Mucosa of descending colon (tissue), 3 donors: ENCODE measurements at regions of chr7 and their contacts with region 1.

Region 1: GRCh38 chr7:26500749-26501352 is 209.2 kb downstream of the SNX10 start:
- DNase-seq: no peak
- ATAC-seq: no peak
- H3K4me3 ChIP-seq: no peak overlapping the region
- H3K4me1 ChIP-seq: no peaks in the 10 kb centered on the region
- CTCF ChIP-seq: no peak

Region 2: GRCh38 chr7:26376175-26376917 is 124.5 kb before region 1 on chr7:
- intact Hi-C with region 1: loop called (anchors 10 kb)
- DNase-seq: peak; percentile 39 to 69 (median 63)
- ATAC-seq: peak; percentile 70
- H3K4me3 ChIP-seq: peak overlapping the region; percentile 17
- H3K4me1 ChIP-seq: no peaks in the 10 kb centered on the region
- CTCF ChIP-seq: no peak

Region 3: DNA sequence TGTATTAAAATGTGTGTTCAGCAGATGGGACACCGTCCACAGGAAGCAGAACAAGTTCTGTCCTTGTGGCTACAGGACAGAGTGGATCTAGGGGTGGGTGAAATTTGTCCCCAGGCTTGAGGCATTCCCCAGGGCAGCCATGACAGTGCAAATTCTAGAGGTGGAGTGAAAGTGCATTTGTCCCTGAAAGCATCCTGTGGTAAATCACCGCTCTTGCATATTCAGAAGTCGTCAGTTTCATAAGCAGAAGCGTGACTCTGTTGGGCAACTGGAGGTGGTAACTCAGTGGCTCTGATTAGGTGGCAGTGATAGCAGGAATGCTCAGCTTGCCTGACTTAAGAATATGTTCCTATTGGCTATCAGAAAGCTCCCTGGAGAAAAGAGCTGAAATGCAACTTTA is 112.6 kb before region 1 on chr7:
- intact Hi-C with region 1: loop called in 1 of 2 experiments (anchors 10 kb)
- DNase-seq: no peak
- ATAC-seq: no peak
- H3K4me3 ChIP-seq: no peak overlapping the region
- H3K4me1 ChIP-seq: no peaks in the 10 kb centered on the region
- CTCF ChIP-seq: no peak

Region 4: DNA sequence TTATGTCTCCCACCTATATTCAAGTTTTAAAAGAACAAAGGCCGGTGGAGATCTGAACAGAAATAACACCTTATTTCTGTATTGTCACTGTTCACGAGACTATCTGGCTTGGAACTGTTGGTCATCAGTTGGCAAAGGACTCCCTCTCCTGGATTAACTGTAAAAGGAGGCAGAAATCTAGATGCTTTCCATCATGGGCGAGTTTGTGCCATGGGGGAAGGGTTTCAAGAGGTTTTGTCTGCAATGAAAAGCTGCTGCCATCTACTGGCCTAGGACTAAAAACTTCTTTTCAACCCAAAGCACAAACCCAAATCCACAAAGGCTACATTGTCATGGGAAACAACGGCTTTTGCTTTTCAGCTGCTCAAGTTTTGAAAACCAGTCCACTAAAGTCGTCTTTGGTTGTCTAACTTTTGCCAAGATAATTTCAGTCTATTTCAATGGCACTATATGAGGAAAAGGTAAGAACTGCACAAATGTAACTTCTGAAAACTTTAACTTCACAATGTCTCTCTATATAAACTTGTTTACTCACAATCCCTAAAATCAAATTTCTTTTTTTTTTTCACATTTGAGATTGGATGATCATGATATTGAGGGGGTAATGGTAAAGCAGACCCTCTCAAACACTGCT is 166.8 kb after region 1 on chr7:
- intact Hi-C with region 1: loop called in 1 of 2 experiments (anchors 10 kb)
- DNase-seq: peak in 2 of 3 donors; percentile 34 to 76
- ATAC-seq: peak; percentile 96
- H3K4me3 ChIP-seq: no peak overlapping the region
- H3K4me1 ChIP-seq: no peaks in the 10 kb centered on the region
- CTCF ChIP-seq: peak; percentile 38